SK-N-SH (cell line): ENCODE measurements at regions of chr21 and their contacts with region 1.

Region 1: GRCh38 chr21:44438531-44439207 is 16.6 kb upstream of the LRRC3 start:
- DNase-seq: peak; percentile 85
- H3K4me3 ChIP-seq: no peak overlapping the region; a peak in 1 of 4 replicates
- H3K27ac ChIP-seq: peak overlapping the region in 1 of 2 experiments; percentile 93; a peak in 2 of 4 replicates
- H3K4me1 ChIP-seq: peaks cover 0 to 54% of the 10 kb centered on the region in 2 experiments; a peak in 1 of 4 replicates
- H3K27me3 ChIP-seq: no peaks in the 10 kb centered on the region
- CTCF ChIP-seq: no peak
- EP300 ChIP-seq: peak in 1 of 2 experiments; percentile 48; a peak in 1 of 4 replicates
- RAD21 ChIP-seq: no peak

Region 2: DNA sequence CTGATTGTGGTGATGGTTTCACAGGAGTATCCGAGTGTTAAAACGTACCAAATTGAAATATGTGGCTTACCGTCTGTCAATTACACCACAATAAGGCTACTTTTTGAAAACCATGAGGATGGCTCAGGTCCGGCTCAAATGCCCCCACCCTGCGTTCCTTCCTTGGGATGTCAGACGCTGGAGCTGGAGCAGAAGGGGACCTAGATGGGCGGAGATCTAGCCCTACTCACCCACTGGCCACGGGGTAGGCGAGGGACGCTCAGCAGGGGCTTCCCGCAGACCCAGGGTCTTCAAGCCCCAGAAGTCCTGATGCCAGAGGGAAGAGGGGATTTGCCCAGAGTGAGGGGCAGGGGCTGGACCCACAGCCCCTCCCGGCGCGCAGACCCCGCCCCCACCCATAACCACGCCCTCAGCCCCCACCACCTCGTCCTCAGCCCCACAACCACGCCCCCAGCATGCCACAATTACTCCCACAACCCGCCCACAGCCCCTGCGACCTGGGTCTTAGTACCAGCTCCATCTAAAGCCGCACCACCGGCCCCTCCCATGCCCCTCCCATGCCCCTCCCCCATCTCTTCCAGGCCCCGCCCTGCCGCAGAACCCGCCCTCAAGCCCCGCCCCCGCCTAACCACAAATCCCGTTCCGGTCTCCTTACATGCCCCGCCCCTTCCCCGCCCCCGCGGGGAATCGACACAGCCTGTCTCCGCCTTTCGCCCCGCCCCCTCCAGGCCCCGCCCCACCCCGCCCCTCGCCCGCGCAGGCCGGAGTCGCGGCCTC is 16.3 kb after region 1 on chr21 and contains the start of gene LRRC3:
- CTCF ChIA-PET with region 1: interaction called, 12 read pairs
- POLR2A ChIA-PET with region 1: interaction called, 7 read pairs
- DNase-seq: peak; percentile 100
- H3K4me3 ChIP-seq: peak within 1 kb of the TSS; percentile 55 to 75
- H3K27ac ChIP-seq: peak within 1 kb of the TSS in 1 of 2 experiments; percentile 25; a peak in 1 of 4 replicates
- H3K4me1 ChIP-seq: peaks cover 0 to 21% of the 10 kb centered on the region in 2 experiments; a peak in 1 of 4 replicates
- H3K27me3 ChIP-seq: peaks cover 5% of the 10 kb centered on the region; the same call in 1 of the 2 replicates
- CTCF ChIP-seq: no peak
- EP300 ChIP-seq: no peak
- RAD21 ChIP-seq: no peak
- polyA plus RNA-seq, gene LRRC3: 1.9 and 2.3 TPM in 2 replicates